GM10248 (cell line): ENCODE measurements at regions of chr1 and their contacts with region 1.

Region 1: GRCh38 chr1:184892116-184892515 is 82.2 kb downstream of the NIBAN1 start:
- DNase-seq: no peak
- CTCF ChIP-seq: no peak

Region 2: DNA sequence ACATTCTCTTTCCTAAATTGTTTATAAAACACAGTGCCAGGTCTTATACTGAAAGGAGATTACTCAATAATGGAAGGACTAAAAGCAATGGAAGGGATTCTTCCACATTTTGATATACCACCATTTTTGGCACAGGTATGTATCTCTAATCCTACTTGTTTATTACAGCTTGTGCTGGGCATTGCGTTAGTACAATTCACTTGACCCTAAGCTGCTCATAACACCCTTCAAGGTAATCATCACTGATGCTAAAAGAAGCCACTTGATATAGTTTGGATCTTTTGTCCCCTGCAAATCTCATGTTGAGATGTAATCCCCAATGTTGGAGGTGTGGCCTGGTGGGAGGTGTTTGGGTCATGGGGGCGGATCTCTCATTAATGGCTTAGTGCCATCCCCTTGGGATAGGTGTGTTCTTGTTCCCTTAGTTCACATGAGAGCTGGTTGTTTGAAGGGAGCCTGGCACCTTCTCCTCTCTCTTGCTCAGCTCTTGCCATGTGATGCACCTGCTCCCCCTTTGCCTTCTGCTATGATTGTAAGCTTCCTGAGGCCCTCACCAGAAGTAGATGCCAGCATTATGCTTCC is 11.1 kb after region 1 on chr1:
- CTCF ChIA-PET with region 1: interaction called, 23 read pairs
- POLR2A ChIA-PET with region 1: no interaction called
- DNase-seq: no peak
- CTCF ChIP-seq: no peak